ENCODE measurements at regions of chr4 and their contacts with region 1.

Region 1: DNA sequence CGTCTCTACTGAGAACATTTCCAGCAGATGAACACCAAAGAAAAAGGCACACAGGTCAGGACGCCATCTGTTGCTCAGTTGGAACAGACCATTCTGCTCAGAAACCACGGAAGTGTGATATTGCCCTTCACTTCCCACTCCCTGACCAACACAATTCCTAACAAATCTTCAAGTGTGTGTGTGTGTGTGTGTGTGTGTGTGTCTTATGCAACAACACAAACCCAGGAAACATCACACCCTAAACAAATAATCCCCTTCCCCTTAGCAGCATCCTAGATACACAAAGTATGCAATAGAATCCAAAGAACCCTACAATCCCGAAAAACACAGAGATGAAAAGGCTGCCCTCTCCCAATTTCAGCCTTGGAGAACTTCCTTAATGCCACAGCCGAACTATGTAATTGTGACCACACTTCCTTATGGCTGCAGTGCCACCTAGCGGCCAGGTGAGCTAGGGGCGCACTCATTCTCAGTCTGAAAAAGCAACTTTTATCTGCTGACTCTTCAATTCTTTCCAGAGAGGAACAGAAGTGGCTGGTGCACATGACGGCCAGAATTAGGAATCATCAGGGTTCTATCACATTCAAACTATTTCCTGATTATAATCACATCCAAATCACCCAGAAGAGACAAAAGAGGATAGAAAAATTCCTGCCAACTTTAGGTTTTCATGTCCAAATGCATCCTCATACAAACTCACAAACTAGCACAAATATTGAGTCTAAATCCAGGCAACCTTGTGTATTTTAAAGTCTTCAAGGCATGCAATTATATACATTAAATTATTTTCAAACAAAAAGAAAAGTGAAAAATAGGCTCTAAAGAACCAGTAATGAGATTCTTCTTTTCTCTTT is 164.9 kb downstream of the DHX15 start:
- DNase-seq: peak in 1 of 2 donors; percentile 70
- H3K4me3 ChIP-seq: no peak overlapping the region
- H3K27ac ChIP-seq: no peak overlapping the region
- H3K4me1 ChIP-seq: no peaks in the 10 kb centered on the region
- H3K27me3 ChIP-seq: no peaks in the 10 kb centered on the region
- CTCF ChIP-seq: peak; percentile 49 to 85 (median 66)

Region 2: DNA sequence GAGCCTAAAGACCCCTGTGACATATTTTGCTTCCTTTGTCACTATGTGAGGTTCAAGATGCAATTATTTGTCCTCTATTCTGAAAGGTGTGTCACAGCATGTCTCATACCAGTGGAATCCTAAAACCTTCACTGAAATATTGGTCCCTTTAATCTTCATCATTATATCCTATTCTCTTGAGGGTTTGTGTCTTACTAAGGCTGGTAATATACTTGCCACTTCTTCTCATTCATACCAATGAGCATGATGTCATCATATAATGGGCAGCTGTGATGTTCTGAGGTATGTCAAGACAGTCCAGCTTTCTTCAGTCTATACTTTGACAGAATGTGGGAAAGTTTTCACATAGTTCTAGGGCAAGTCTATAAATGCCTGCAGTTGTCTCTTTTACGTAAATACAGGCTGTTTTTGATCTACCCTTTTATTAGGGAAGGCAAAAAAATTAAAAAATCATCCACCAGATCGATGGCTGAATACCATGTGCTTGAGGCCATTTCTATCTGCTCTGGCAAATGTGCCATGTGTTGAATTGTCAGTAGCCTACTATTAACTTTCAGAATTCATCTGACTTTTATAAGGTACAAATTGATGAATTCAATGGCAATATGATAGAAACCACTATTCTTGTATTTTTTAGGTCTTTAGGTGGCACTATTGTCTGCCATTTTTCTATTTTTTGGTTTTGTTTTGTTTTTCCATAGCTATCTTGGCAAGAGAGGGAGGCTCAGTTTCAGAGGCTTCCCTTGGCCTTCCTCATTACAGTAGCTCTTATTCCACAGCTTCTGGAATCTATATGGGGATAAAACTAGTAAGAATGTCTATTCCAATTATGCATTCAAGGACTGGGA is 738.5 kb before region 1 on chr4:
- intact Hi-C with region 1: loop called (anchors 5 kb)
- DNase-seq: no peak
- H3K4me3 ChIP-seq: no peak overlapping the region
- H3K27ac ChIP-seq: no peak overlapping the region
- H3K4me1 ChIP-seq: no peaks in the 10 kb centered on the region
- H3K27me3 ChIP-seq: no peaks in the 10 kb centered on the region
- CTCF ChIP-seq: peak in 1 of 3 experiments; percentile 16

Measured in ascending aorta (tissue), 2 donors.